A673 (cell line): ENCODE measurements at regions of chrX and their contacts with region 1.

Region 1: GRCh38 chrX:118839334-118839958 is 15.8 kb downstream of the ZCCHC12 start:
- DNase-seq: peak; percentile 48
- H3K4me3 ChIP-seq: peak overlapping the region; percentile 34
- H3K27ac ChIP-seq: no peak overlapping the region
- H3K4me1 ChIP-seq: no peaks in the 10 kb centered on the region
- H3K27me3 ChIP-seq: no peaks in the 10 kb centered on the region
- CTCF ChIP-seq: peak; percentile 68

Region 2: DNA sequence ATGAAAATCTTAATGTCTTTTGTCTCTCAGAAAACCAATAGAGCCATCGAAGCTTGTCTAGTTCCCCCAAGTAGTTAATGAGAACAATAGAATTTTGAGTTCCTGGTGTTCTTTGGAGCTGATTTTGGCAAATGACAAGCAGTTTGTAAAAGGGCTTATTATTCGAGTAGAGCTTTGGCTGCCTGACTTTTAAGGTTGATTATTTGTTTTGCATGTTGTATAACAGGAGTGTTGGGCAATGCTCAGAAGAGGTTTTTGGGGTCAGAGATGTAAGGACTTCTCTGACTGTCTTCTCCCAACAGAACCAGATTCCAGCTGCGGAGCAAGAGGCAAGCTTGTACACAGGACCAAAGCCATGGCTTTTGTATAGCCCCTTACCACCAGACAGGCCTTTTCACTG is 14.2 kb after region 1 on chrX:
- CTCF ChIA-PET with region 1: no interaction called
- POLR2A ChIA-PET with region 1: interaction called, 19 read pairs
- intact Hi-C with region 1: no loop called
- DNase-seq: no peak
- H3K4me3 ChIP-seq: no peak overlapping the region
- H3K27ac ChIP-seq: no peak overlapping the region
- H3K4me1 ChIP-seq: no peaks in the 10 kb centered on the region
- H3K27me3 ChIP-seq: no peaks in the 10 kb centered on the region
- CTCF ChIP-seq: no peak